Sigmoid colon (tissue), 7 donors: ENCODE measurements at regions of chr17 and their contacts with region 1.

Region 1: DNA sequence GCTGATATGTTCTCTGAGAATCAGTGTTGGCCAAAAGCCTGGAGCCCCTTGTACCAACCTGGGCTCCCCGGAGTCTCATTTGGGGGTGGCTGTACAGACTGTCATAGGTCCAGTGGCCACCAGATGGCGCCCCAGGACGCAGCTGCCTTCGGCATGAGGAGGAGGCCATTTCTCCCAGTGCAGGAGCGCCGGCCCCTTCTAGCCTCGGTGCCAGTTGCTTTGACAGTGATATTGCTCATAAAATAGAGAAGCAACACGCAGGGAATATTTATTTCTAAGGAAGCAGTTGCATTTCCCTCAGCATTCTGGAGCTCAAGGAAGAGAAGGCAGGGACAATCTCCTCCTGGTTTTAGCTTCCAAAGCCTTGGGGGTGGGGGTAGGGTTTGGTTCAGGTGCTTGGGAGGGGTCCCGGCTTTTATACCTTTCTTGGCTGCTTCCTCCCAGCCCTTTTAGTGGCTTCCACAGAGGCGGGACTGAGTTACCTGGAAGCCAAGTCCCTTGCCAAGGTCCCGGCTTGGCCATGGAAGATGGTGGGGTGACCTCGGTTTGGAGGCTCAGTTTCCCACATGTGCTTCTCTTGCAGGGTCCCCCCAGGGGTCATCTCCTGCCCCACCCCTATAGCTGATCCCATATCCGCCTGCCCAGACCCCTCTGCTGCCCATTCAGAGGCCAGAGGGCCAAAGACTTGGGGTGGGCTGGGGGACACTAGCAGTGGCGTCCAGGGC is 117.8 kb upstream of the CDC42EP4 start:
- DNase-seq: peak; percentile 92
- H3K4me3 ChIP-seq: no peak overlapping the region
- H3K27ac ChIP-seq: no peak overlapping the region
- H3K4me1 ChIP-seq: peaks cover 0 to 16% (median 7%) of the 10 kb centered on the region in 4 donors
- H3K27me3 ChIP-seq: peaks cover 0 to 21% (median 0%) of the 10 kb centered on the region in 3 donors
- CTCF ChIP-seq: peak; percentile 89 to 96 (median 91)
- EP300 ChIP-seq: no peak
- POLR2A ChIP-seq: no peak

Region 2: DNA sequence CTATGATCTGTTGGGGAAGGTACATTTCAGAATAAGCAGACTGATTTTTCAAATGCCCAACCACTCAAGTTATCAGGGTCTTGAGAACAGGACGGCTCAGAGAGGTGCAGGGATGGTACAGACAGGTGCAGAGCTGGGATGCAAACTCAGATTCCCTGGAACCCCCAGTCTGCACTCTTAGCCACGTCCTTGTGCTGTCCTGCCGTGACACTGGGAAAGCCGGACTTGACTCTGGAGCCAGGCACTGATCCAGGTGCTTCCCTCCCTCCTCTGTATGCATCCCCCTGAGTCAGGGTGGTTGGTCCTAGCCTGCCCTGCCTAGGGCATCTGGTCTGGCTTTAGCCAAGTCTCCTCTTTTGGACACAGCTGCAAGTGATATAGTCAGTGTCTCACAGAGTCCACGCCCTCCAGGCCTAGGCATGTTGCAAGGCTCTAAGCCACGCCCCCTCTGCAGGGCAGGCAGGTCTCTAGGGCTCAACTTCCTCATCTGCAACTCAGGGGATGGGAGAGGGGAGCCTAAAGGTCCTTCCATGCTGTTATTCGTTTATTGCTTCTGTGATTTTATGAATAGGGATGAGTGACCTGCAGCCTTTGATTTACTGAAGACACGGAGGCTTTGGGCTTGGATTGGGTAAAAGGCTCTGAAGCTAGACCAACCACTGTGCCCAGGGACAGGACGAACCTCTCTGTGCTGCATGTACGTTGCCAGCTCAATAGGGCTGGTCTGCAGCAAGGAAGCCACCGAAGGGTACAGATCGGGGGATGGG is 117.4 kb after region 1 on chr17:
- intact Hi-C with region 1: no loop called
- DNase-seq: no peak
- H3K4me3 ChIP-seq: no peak overlapping the region
- H3K27ac ChIP-seq: no peak overlapping the region
- H3K4me1 ChIP-seq: no peaks in the 10 kb centered on the region
- H3K27me3 ChIP-seq: peaks cover 0 to 13% (median 0%) of the 10 kb centered on the region in 3 donors
- CTCF ChIP-seq: no peak
- EP300 ChIP-seq: no peak
- POLR2A ChIP-seq: no peak

Region 3: DNA sequence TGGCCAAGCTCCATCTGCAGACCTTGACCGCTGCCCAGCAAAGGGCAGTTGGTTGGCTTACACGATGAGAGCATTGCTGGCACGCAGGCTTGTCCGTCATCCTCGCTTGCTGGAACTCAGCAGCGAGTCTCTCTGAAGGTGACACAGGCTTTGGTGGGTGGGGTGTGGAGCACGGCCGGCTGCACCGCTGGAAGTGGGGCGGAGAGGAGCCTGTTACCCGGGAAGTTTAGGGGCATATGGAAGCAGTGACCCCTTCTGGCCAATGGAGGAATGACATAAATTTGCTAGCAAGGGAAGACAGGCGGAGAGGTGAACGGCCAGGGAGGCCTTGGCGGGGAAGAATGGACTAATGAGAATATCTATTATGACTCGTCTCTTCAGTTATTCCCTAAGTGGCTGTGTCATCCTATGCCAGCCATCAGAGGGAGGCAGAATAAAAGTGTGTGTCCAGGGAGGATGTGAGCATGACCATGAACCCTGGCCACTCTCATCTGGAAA is 280.5 kb after region 1 on chr17:
- intact Hi-C with region 1: loop called (anchors 2 kb)
- DNase-seq: no peak
- H3K4me3 ChIP-seq: no peak overlapping the region
- H3K27ac ChIP-seq: no peak overlapping the region
- H3K4me1 ChIP-seq: peaks cover 0 to 4% (median 0%) of the 10 kb centered on the region in 4 donors
- H3K27me3 ChIP-seq: peaks cover 0 to 59% (median 25%) of the 10 kb centered on the region in 3 donors
- CTCF ChIP-seq: peak; percentile 13 to 63 (median 53)
- EP300 ChIP-seq: no peak
- POLR2A ChIP-seq: no peak

Region 4: DNA sequence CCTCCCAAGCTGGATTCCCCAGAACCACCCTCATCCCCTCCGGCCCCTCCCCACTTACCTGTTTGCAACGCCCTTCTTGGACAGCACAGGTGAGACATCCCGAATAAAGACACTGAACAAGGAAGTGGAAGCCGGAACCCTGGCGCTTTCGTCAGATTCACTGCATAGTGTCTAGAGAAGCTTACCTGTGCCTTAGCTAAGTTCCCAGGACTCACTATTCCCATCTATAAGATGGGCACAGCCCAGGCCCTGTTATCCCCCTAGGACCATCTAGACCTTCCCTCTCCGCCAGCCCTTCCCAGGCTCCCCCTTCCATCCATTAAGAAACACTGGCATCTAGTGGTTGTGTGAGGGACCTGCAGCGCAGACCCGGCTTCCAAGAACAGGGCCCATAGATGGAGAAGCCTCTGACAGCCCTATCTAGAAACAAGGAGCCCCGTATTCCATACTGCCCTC is 747.0 kb after region 1 on chr17:
- intact Hi-C with region 1: loop called (anchors 1 kb)
- DNase-seq: no peak
- H3K4me3 ChIP-seq: no peak overlapping the region
- H3K27ac ChIP-seq: no peak overlapping the region
- H3K4me1 ChIP-seq: no peaks in the 10 kb centered on the region
- H3K27me3 ChIP-seq: peaks cover 8 to 39% (median 16%) of the 10 kb centered on the region in 3 donors
- CTCF ChIP-seq: peak; percentile 54 to 76 (median 68)
- EP300 ChIP-seq: no peak
- POLR2A ChIP-seq: no peak